Activated CD4-positive, alpha-beta T cell treated with anti-CD3 and anti-CD28 coated beads for 36 hours (primary cell): ENCODE measurements at regions of chr3 and their contacts with region 1.

Region 1: DNA sequence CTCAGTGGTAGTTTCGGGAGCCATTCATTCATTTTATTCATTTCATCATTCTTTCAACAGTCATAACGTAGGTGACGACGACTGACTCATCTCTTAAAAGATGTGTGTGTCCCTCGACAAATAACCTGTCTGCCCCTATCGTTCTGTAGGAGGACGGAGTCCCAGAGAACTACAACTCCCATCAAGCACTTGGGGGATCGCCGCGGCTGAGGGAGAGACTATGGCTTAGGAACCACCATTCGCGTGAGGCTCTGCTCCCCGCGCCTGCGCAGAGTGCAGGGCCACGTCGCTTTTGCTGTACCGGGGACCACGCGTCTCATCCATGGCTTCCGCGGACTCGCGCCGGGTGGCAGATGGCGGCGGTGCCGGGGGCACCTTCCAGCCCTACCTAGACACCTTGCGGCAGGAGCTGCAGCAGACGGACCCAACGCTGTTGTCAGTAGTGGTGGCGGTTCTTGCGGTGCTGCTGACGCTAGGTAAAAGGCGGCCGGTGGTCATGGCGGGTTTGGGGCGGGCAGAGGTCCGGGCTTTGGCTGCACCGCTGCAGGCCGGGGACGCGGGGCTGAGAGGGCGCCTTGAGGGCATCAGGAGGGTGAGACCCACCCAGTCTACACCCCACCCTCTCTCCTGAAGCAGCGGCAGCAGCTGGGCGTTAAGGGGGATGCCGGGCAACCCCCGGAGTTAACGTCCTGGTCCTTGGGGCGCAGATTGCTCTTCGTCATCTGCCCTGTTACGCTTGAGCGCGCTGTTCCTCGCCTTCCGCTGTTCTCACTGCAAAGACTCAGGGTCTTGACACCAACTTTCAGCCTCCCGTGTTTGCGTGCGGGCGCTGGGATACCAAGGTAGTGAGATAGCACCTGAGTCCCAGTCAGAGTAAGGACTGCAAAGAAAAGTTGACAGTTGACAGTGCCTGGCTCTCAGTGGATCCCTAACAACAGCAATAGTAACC is at the start of gene SRPRB:
- DNase-seq: peak; percentile 98
- ATAC-seq: peak; percentile 99
- H3K4me3 Mint-ChIP-seq: peak within 1 kb of the TSS; percentile 93
- H3K27ac Mint-ChIP-seq: peak within 1 kb of the TSS; percentile 98
- H3K4me1 Mint-ChIP-seq: peaks cover 39% of the 10 kb centered on the region
- H3K27me3 Mint-ChIP-seq: peaks cover 6% of the 10 kb centered on the region
- total RNA-seq, gene SRPRB: 42.7 to 66.2 TPM

Region 2: DNA sequence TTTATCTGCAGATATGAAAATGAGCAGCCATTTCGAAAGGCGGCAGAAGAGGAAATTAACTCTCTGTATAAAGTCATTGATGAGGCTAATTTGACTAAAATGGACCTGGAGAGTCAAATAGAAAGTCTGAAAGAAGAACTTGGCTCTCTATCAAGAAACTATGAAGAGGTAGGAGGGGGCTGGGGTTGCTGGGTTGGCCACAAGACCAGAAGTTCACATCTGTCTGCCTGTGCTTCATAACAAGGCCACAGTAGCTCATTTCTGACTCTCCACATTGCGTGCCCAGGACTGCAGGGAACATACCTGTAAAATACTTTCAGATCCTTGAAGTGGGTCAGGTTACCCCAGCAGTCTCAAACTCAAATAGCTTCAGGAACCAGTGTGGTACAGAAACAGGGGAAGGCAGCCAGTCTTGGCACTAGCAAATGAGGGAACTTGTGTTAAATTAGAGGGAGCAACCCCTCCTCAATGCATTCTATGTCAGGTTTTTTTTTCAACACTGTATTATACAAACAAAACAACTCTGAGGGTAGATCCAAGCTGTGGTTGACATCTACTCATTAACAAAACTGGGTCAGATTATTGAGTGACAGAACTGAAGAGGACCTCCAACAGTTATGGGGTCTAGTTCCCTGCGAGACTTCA is 357.2 kb before region 1 on chr3:
- CTCF ChIA-PET with region 1: no interaction called
- POLR2A ChIA-PET with region 1: no interaction called
- intact Hi-C with region 1: loop called (anchors 2 to 10 kb)
- DNase-seq: peak; percentile 77
- ATAC-seq: peak; percentile 93
- H3K4me3 Mint-ChIP-seq: no peak overlapping the region
- H3K27ac Mint-ChIP-seq: peak overlapping the region; percentile 69
- H3K4me1 Mint-ChIP-seq: peaks cover 38% of the 10 kb centered on the region
- H3K27me3 Mint-ChIP-seq: no peaks in the 10 kb centered on the region

Region 3: GRCh38 chr3:133506215-133506901 is 299.4 kb before region 1 on chr3:
- CTCF ChIA-PET with region 1: no interaction called
- POLR2A ChIA-PET with region 1: no interaction called
- intact Hi-C with region 1: loop called in 1 of 2 experiments (anchors 1 kb)
- DNase-seq: peak; percentile 42
- ATAC-seq: peak; percentile 99
- H3K4me3 Mint-ChIP-seq: peak overlapping the region; percentile 48
- H3K27ac Mint-ChIP-seq: peak overlapping the region; percentile 87
- H3K4me1 Mint-ChIP-seq: peaks cover 13% of the 10 kb centered on the region
- H3K27me3 Mint-ChIP-seq: no peaks in the 10 kb centered on the region

Region 4: GRCh38 chr3:133745981-133746711 is 59.7 kb before region 1 on chr3 and contains the start of gene TF:
- CTCF ChIA-PET with region 1: no interaction called
- POLR2A ChIA-PET with region 1: no interaction called
- intact Hi-C with region 1: no loop called
- DNase-seq: no peak
- ATAC-seq: no peak
- H3K4me3 Mint-ChIP-seq: no peak within 1 kb of the TSS
- H3K27ac Mint-ChIP-seq: no peak within 1 kb of the TSS
- H3K4me1 Mint-ChIP-seq: peaks cover 2% of the 10 kb centered on the region
- H3K27me3 Mint-ChIP-seq: peaks cover 36% of the 10 kb centered on the region
- total RNA-seq, gene TF: 0.11 to 0.12 TPM

Region 5: DNA sequence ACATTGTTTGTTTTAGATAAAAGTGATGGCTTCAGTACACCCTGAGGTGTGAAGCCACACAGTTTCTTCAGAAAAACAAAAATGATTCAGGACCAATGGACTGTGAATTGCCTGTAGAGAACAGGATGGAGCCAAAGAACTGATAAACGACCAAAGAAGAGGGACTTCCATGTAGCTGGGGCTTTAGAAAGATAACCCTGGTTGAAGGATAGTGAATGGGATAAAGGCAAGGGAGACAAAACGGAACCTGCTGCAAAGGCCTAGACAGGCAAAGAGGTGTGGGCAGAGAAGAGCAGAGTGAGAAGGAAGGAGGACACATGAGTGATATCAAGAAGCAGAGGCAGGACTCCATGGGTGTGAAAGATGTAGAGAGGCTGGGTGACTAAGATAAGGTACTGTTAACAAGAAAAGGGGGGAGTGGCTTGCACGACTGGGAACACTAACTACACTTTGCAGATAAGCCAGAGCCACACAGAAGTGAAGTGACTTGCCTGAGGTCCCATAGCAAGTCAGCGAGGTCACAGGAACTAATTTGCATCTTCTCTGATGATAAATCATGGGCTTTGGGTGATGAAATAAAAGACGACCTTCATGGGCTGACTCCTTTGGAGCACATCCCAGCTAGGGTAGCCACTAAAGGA is 45.6 kb after region 1 on chr3:
- CTCF ChIA-PET with region 1: no interaction called
- POLR2A ChIA-PET with region 1: no interaction called
- intact Hi-C with region 1: loop called in 1 of 2 experiments (anchors 1 kb)
- DNase-seq: peak; percentile 60
- ATAC-seq: peak; percentile 97
- H3K4me3 Mint-ChIP-seq: no peak overlapping the region
- H3K27ac Mint-ChIP-seq: peak overlapping the region; percentile 7
- H3K4me1 Mint-ChIP-seq: peaks cover 8% of the 10 kb centered on the region
- H3K27me3 Mint-ChIP-seq: peaks cover 3% of the 10 kb centered on the region

Region 6: GRCh38 chr3:134242649-134243617 is 437.1 kb after region 1 on chr3:
- CTCF ChIA-PET with region 1: no interaction called
- POLR2A ChIA-PET with region 1: interaction called, 7 read pairs
- intact Hi-C with region 1: loop called in 1 of 2 experiments (anchors 5 kb)
- DNase-seq: peak; percentile 20
- ATAC-seq: peak; percentile 51
- H3K4me3 Mint-ChIP-seq: no peak overlapping the region
- H3K27ac Mint-ChIP-seq: no peak overlapping the region
- H3K4me1 Mint-ChIP-seq: peaks cover 88% of the 10 kb centered on the region
- H3K27me3 Mint-ChIP-seq: no peaks in the 10 kb centered on the region